WTC11 (cell line): ENCODE measurements at regions of chr22 and their contacts with region 1.

Region 1: GRCh38 chr22:23240639-23241389 is 60.5 kb downstream of the BCR start:
- DNase-seq: peak; percentile 62
- ATAC-seq: peak; percentile 6
- H3K4me3 Mint-ChIP-seq: no peak overlapping the region
- H3K27ac Mint-ChIP-seq: peak overlapping the region; percentile 100
- H3K4me1 Mint-ChIP-seq: peaks cover 88% of the 10 kb centered on the region
- H3K27me3 Mint-ChIP-seq: no peaks in the 10 kb centered on the region
- CTCF ChIP-seq: no peak

Region 2: GRCh38 chr22:23069502-23070357 is 171.1 kb before region 1 on chr22:
- CTCF ChIA-PET with region 1: no interaction called
- POLR2A ChIA-PET with region 1: no interaction called
- DNase-seq: peak; percentile 93
- ATAC-seq: peak; percentile 95
- H3K4me3 Mint-ChIP-seq: peak overlapping the region; percentile 84
- H3K27ac Mint-ChIP-seq: no peak overlapping the region
- H3K4me1 Mint-ChIP-seq: peaks cover 17% of the 10 kb centered on the region
- H3K27me3 Mint-ChIP-seq: peaks cover 46% of the 10 kb centered on the region
- CTCF ChIP-seq: no peak

Region 3: GRCh38 chr22:23178512-23179254 is 62.1 kb before region 1 on chr22:
- CTCF ChIA-PET with region 1: interaction called, 30 read pairs
- POLR2A ChIA-PET with region 1: interaction called, 7 read pairs
- DNase-seq: peak; percentile 84
- ATAC-seq: peak; percentile 57
- H3K4me3 Mint-ChIP-seq: no peak overlapping the region; the same call in 1 of the 2 replicates
- H3K27ac Mint-ChIP-seq: no peak overlapping the region
- H3K4me1 Mint-ChIP-seq: peaks cover 39% of the 10 kb centered on the region
- H3K27me3 Mint-ChIP-seq: no peaks in the 10 kb centered on the region; the same call in none of the 2 replicates
- CTCF ChIP-seq: peak; percentile 88

Region 4: GRCh38 chr22:23251445-23252232 is 10.8 kb after region 1 on chr22:
- CTCF ChIA-PET with region 1: interaction called, 16 read pairs
- POLR2A ChIA-PET with region 1: no interaction called
- DNase-seq: no peak
- ATAC-seq: no peak
- H3K4me3 Mint-ChIP-seq: no peak overlapping the region
- H3K27ac Mint-ChIP-seq: peak overlapping the region; percentile 19; the same call in 1 of the 2 replicates
- H3K4me1 Mint-ChIP-seq: peaks cover 65% of the 10 kb centered on the region
- H3K27me3 Mint-ChIP-seq: no peaks in the 10 kb centered on the region
- CTCF ChIP-seq: no peak

Region 5: GRCh38 chr22:23263651-23264555 is 23.1 kb after region 1 on chr22:
- CTCF ChIA-PET with region 1: interaction called, 25 read pairs
- POLR2A ChIA-PET with region 1: interaction called, 4 read pairs
- DNase-seq: no peak
- ATAC-seq: no peak
- H3K4me3 Mint-ChIP-seq: no peak overlapping the region
- H3K27ac Mint-ChIP-seq: peak overlapping the region; percentile 72
- H3K4me1 Mint-ChIP-seq: peaks cover 45% of the 10 kb centered on the region
- H3K27me3 Mint-ChIP-seq: no peaks in the 10 kb centered on the region
- CTCF ChIP-seq: no peak